ENCODE measurements at regions of chr2 and their contacts with region 1.

Region 1: DNA sequence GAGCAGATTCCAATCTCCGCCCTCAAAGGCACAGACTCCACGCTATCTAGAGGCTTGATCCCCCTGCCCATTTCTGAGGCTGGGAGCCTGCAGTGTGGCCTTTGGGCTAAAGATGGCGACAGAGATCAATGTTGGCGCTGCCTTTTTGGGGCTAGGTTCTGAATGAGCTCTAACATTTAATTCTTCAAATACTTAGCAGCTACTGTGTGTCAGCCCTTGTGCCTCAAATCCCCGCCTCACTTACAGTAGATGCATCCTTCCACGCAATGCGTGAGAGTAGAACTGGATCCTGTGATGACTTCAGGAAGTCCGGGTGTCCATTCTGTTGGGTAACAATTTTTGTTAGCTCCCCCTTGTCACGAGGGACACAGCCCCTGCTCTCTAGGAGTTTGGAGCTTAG is 12.4 kb downstream of the IL1F10 start:
- DNase-seq: peak; percentile 61
- ATAC-seq: peak; percentile 42
- H3K4me3 Mint-ChIP-seq: no peak overlapping the region
- H3K27ac Mint-ChIP-seq: no peak overlapping the region
- H3K4me1 Mint-ChIP-seq: peaks cover 19% of the 10 kb centered on the region
- H3K27me3 Mint-ChIP-seq: peaks cover 8% of the 10 kb centered on the region

Region 2: GRCh38 chr2:112784199-112785189 is 295.6 kb before region 1 on chr2 and contains the start of gene IL1A:
- CTCF ChIA-PET with region 1: no interaction called
- POLR2A ChIA-PET with region 1: no interaction called
- DNase-seq: no peak
- ATAC-seq: no peak
- H3K4me3 Mint-ChIP-seq: no peak within 1 kb of the TSS
- H3K27ac Mint-ChIP-seq: no peak within 1 kb of the TSS
- H3K4me1 Mint-ChIP-seq: peaks cover 7% of the 10 kb centered on the region
- H3K27me3 Mint-ChIP-seq: peaks cover 34% of the 10 kb centered on the region
- total RNA-seq, gene IL1A: not detected

Region 3: GRCh38 chr2:113098041-113098440 is 17.9 kb after region 1 on chr2:
- CTCF ChIA-PET with region 1: interaction called, 20 read pairs
- POLR2A ChIA-PET with region 1: no interaction called
- DNase-seq: no peak
- ATAC-seq: peak; percentile 79
- H3K4me3 Mint-ChIP-seq: peak overlapping the region; percentile 60
- H3K27ac Mint-ChIP-seq: peak overlapping the region; percentile 79
- H3K4me1 Mint-ChIP-seq: peaks cover 28% of the 10 kb centered on the region
- H3K27me3 Mint-ChIP-seq: peaks cover 9% of the 10 kb centered on the region

Region 4: GRCh38 chr2:113173542-113174395 is 93.6 kb after region 1 on chr2 and contains the start of gene PSD4:
- CTCF ChIA-PET with region 1: interaction called, 22 read pairs
- POLR2A ChIA-PET with region 1: interaction called, 4 read pairs
- DNase-seq: peak; percentile 96
- ATAC-seq: peak; percentile 75
- H3K4me3 Mint-ChIP-seq: peak within 1 kb of the TSS; percentile 83
- H3K27ac Mint-ChIP-seq: peak within 1 kb of the TSS; percentile 91
- H3K4me1 Mint-ChIP-seq: peaks cover 70% of the 10 kb centered on the region
- H3K27me3 Mint-ChIP-seq: peaks cover 2% of the 10 kb centered on the region
- total RNA-seq, gene PSD4: 394 to 404 TPM

Region 5: DNA sequence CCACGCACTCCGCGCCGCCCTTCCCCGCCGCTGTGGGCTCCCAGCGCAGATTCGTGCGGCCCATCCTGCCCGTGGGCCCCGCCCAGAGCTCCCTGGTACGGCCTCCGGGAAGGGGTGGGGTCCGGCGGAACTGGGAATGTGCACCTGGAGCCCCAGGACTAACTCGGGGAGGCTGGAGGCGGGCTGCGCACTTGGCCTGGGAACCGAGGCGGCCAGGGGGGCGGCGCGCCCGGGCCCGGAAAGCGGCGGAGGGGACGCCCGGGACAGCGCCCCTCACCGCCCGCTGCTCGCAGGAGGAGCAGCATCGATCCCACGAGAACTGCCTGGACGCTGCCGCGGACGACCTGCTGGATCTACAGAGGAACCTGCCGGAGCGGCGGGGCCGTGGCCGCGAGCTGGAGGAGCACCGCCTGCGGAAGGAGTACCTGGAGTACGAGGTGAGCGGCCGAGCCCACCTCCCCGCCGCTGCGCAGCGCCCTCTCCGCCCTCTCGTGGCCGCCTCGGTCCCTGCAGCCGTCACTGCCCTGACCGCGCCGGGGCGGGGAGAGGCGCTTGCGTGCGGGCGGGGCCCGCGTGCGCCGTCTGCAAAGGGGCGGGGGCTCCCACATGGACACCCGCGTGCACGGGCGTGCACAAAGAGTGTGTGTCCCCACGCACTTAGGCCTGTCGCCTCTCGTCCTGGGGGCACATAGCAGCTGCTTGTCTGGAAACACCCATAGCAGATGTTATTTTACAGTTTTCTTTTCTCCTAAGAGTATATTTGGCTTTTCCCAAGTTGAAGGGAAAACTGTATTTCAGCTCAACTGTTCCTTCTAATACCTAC is 118.9 kb after region 1 on chr2:
- CTCF ChIA-PET with region 1: interaction called, 29 read pairs
- POLR2A ChIA-PET with region 1: no interaction called
- DNase-seq: peak; percentile 78
- ATAC-seq: peak; percentile 78
- H3K4me3 Mint-ChIP-seq: no peak overlapping the region
- H3K27ac Mint-ChIP-seq: no peak overlapping the region
- H3K4me1 Mint-ChIP-seq: peaks cover 47% of the 10 kb centered on the region
- H3K27me3 Mint-ChIP-seq: no peaks in the 10 kb centered on the region

Region 6: DNA sequence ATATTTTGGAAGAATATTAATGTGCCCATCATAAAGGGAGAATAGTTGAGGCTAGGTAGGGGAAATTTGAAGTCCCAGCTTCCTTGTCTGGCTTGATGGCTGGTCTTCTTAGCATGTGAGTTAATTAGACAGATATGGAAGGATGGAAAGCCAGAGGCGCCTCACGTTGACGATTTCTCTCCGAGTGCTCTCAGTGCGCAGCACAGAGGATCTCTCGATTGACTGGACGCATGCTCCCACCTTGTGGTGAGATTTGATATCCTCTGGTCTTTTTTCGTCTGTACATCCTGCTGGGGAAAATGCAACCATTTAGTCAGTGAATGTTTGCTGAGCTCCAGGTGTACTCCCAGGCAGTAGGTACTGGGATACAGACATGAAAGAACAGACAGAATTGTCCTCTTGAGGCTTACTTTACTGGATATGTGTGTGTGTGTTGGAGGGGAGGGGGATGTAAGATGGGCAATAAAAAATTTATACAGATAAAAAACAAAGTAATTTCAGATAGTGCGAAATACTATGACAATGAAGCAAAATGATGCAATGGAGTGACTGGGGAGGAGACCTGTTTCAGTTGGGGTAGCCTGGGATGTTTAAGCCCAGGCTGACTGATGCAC is 290.5 kb after region 1 on chr2:
- CTCF ChIA-PET with region 1: interaction called, 10 read pairs
- POLR2A ChIA-PET with region 1: no interaction called
- DNase-seq: peak; percentile 86
- ATAC-seq: peak; percentile 99
- H3K4me3 Mint-ChIP-seq: no peak overlapping the region
- H3K27ac Mint-ChIP-seq: no peak overlapping the region
- H3K4me1 Mint-ChIP-seq: peaks cover 35% of the 10 kb centered on the region
- H3K27me3 Mint-ChIP-seq: peaks cover 11% of the 10 kb centered on the region

Measured in activated CD8-positive, alpha-beta T cell treated with anti-CD3 and anti-CD28 coated beads, Interleukin-2, amount 10 ng/mL, durations not matched to agents 7 days and 5 days (primary cell).